Kidney (tissue), 22 donors: ENCODE measurements at regions of chr18 and their contacts with region 1.

Region 1: GRCh38 chr18:60070631-60071030 is 170.8 kb downstream of the PMAIP1 start:
- DNase-seq: no peak
- H3K4me3 ChIP-seq: no peak overlapping the region
- H3K27ac ChIP-seq: no peak overlapping the region
- H3K4me1 ChIP-seq: no peaks in the 10 kb centered on the region
- H3K27me3 ChIP-seq: no peaks in the 10 kb centered on the region
- CTCF ChIP-seq: no peak

Region 2: DNA sequence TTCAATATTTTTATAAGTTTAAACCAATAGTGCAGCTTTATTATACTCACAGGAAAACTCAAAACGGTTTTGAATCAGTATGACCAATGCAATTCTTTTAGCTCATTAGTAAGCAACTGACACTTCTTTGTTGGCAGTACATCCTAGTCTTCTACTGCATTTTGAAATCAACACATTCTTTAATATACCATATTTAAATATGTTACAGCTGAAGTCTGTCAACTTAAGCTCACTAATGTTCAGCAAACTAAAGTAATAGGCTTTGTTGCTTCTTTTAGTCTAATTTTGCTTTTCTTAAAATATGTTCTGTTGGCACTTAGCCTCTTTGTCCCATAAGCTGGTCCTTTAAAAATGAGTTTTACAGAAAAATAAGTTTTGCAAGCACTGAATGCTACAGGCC is 318.0 kb before region 1 on chr18:
- intact Hi-C with region 1: no loop called
- DNase-seq: no peak
- H3K4me3 ChIP-seq: no peak overlapping the region
- H3K27ac ChIP-seq: no peak overlapping the region
- H3K4me1 ChIP-seq: no peaks in the 10 kb centered on the region
- H3K27me3 ChIP-seq: no peaks in the 10 kb centered on the region
- CTCF ChIP-seq: no peak

Region 3: DNA sequence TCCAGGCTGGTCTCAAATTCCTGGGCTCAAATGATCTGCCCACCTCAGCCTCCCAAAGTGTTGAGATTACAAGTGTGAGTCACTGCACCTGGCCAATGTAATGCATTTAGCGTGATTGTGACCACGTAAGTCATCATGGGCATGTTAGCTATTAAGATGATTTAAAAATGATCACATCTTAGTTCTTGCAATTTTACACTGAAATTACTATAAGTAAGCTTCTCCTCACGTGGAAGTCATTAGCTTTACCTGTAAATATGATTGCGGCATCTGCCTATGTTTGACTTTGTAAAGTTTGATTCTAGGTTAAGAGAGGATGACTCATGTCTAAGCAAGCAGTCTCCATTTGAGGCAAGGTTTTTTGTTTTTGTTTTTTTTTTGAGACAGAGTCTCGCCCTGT is 85.3 kb before region 1 on chr18:
- intact Hi-C with region 1: no loop called
- DNase-seq: no peak
- H3K4me3 ChIP-seq: no peak overlapping the region
- H3K27ac ChIP-seq: no peak overlapping the region
- H3K4me1 ChIP-seq: peaks cover 0 to 2% (median 0%) of the 10 kb centered on the region in 3 donors
- H3K27me3 ChIP-seq: no peaks in the 10 kb centered on the region
- CTCF ChIP-seq: no peak

Region 4: GRCh38 chr18:60146220-60146960 is 75.8 kb after region 1 on chr18:
- intact Hi-C with region 1: loop called (anchors 10 kb)
- DNase-seq: no peak
- H3K4me3 ChIP-seq: no peak overlapping the region
- H3K27ac ChIP-seq: no peak overlapping the region
- H3K4me1 ChIP-seq: no peaks in the 10 kb centered on the region
- H3K27me3 ChIP-seq: no peaks in the 10 kb centered on the region
- CTCF ChIP-seq: no peak